ENCODE measurements at regions of chr6 and their contacts with region 1.

Region 1: DNA sequence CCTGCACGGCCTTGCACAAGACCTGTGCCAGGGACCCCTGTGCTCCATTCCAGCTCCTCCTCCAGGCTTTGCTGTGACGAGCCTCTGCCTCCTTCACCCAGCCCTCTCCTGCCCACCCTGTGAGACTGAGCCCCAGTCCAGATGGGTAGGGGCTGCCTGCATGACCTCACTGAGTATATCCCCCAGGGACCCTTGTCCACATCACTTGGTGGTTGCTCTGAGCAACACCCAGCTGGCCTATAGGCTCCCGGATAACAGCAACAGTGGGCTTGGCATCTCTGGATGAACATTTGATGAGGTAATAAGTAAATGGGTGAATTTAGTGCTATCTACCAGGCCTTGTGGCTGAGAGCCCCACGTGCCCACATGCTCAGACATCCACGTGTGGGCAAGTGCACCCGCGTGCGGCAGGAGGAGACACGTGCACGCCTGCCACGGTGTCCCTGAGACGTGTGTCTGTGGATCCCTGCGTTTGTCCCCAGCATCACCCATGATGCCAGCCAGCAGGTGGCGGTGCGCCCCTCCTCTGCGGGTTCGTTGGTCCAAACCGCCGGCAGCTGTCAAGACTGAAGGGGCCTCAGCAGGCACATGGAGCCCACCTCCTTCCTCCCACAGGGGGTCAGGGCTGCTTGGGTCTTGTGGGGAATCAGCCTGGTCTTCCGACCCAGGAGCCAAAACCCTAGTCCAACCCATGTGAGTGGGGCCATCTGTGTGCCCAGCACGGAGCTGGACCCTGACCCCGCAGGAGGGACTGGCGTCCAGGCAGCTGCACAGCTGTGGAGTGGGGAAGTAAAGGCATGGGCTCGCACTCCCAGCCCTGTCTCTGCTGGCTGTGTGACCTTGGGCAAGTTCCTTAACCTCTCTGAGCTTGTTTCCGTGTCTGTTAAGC is 45.9 kb downstream of the FGD2 start:
- DNase-seq: peak; percentile 95
- ATAC-seq: peak; percentile 47
- H3K4me3 Mint-ChIP-seq: peak overlapping the region; percentile 83
- H3K27ac Mint-ChIP-seq: peak overlapping the region; percentile 99
- H3K4me1 Mint-ChIP-seq: peaks cover 56% of the 10 kb centered on the region
- H3K27me3 Mint-ChIP-seq: no peaks in the 10 kb centered on the region
- CTCF ChIP-seq: peak; percentile 84

Region 2: DNA sequence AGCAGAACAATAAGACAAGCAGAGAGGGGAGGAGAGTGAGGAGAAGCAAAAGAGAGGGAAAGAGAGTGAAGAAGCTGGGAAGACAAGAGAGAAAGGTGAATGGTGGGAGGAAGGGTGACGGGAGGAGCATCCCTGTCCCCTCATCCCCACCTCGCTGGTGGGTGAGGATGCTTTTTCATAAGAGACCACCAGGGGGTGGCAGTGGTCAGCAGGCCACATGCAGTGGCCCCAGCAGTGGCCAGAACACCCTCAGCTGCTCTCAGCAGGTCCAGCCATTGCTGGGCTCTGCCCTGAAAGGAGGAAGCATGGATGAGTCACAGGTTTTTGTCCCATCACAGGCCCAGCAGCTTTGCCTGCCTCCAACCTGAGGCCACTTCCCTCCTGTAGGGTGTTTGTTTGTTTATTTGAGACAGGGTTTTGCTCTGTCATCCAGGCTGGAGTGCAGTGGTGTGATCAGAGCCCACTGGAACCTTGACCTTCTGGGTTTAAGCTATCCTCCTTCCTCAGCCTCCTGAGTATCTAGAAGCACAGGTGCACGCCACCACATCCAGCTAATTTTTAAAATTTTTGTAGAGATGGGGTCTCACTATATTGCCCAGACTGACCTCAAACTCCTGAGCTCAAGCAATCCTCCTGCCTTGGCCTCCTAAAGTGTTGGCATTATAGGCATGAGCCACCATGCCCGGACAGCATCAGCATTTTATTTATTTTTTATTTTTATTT is 22.0 kb before region 1 on chr6:
- CTCF ChIA-PET with region 1: interaction called, 405 read pairs
- POLR2A ChIA-PET with region 1: interaction called, 123 read pairs
- intact Hi-C with region 1: loop called (anchors 1 kb)
- DNase-seq: peak; percentile 70
- ATAC-seq: peak; percentile 25
- H3K4me3 Mint-ChIP-seq: no peak overlapping the region
- H3K27ac Mint-ChIP-seq: peak overlapping the region; percentile 67
- H3K4me1 Mint-ChIP-seq: peaks cover 65% of the 10 kb centered on the region
- H3K27me3 Mint-ChIP-seq: no peaks in the 10 kb centered on the region
- CTCF ChIP-seq: peak; percentile 58

Region 3: DNA sequence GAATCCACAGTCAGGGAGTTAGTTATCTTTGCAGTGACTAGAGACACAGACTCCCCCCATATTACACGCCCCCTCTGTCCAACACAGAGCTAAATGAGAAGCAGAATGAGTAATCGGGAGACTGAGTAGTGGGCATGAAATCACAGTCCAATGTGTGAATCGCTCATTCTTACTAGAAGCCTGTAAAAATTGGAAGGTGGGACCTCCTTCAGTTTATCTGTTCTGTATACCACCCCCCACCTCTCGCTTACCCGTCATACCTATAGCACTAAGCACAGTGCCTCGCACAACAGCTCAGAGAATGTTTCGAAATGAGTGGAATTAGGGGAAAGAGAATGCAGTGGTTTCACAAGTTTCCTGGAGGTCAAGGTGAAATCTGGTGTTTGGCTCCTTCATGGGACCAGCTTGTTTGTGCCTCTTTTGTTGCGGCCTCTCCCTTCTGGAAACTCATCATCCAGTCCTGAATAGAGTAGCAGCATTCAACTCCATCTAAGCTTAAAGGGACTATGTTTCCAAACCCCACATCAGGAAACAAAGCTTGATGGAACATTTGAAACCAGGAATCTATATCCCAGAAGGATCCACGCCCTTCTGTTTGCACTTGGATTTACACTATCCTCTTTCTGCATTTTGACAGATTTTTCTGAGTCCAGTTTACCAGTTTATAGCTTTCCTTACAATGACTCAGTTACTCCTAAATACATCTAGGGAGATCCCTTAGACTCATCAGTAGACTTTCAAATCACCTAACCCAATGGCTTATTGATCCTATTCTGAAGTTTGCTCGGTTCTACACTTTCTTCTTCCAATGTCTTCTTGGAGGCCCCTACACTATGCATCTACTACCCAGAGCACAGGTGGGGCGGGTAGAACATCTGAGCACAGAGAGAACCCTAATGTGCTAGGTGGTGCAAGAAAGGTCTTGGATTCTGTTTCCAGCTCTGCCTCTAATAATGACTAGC is 59.4 kb after region 1 on chr6:
- CTCF ChIA-PET with region 1: interaction called, 14 read pairs
- POLR2A ChIA-PET with region 1: interaction called, 3 read pairs
- intact Hi-C with region 1: no loop called
- DNase-seq: peak; percentile 62
- ATAC-seq: peak; percentile 93
- H3K4me3 Mint-ChIP-seq: no peak overlapping the region
- H3K27ac Mint-ChIP-seq: no peak overlapping the region
- H3K4me1 Mint-ChIP-seq: peaks cover 15% of the 10 kb centered on the region
- H3K27me3 Mint-ChIP-seq: no peaks in the 10 kb centered on the region
- CTCF ChIP-seq: no peak

Region 4: GRCh38 chr6:37177077-37177934 is 125.9 kb after region 1 on chr6:
- CTCF ChIA-PET with region 1: interaction called, 226 read pairs
- POLR2A ChIA-PET with region 1: interaction called, 261 read pairs
- intact Hi-C with region 1: loop called (anchors 2 kb)
- DNase-seq: no peak
- ATAC-seq: no peak
- H3K4me3 Mint-ChIP-seq: peak overlapping the region; percentile 8
- H3K27ac Mint-ChIP-seq: peak overlapping the region; percentile 91
- H3K4me1 Mint-ChIP-seq: peaks cover 67% of the 10 kb centered on the region
- H3K27me3 Mint-ChIP-seq: no peaks in the 10 kb centered on the region
- CTCF ChIP-seq: no peak

Region 5: GRCh38 chr6:37190159-37190535 is 138.8 kb after region 1 on chr6:
- CTCF ChIA-PET with region 1: interaction called, 16 read pairs
- POLR2A ChIA-PET with region 1: interaction called, 5 read pairs
- intact Hi-C with region 1: no loop called
- DNase-seq: peak; percentile 52
- ATAC-seq: peak; percentile 63
- H3K4me3 Mint-ChIP-seq: no peak overlapping the region
- H3K27ac Mint-ChIP-seq: peak overlapping the region; percentile 77
- H3K4me1 Mint-ChIP-seq: peaks cover 72% of the 10 kb centered on the region
- H3K27me3 Mint-ChIP-seq: no peaks in the 10 kb centered on the region
- CTCF ChIP-seq: no peak